Motor neuron (in vitro differentiated cells): ENCODE measurements at regions of chr9 and their contacts with region 1.

Region 1: GRCh38 chr9:2072752-2073405 is 57.7 kb downstream of the SMARCA2 start:
- ATAC-seq: no peak
- H3K4me3 ChIP-seq: no peak overlapping the region
- H3K27ac ChIP-seq: no peak overlapping the region
- H3K4me1 ChIP-seq: no peaks in the 10 kb centered on the region

Region 2: GRCh38 chr9:2014696-2015580 is 57.9 kb before region 1 on chr9 and contains the start of gene SMARCA2:
- in situ Hi-C with region 1: loop called in 1 of 9 experiments (anchors 10 kb)
- ATAC-seq: peak; percentile 71 to 89 (median 88)
- H3K4me3 ChIP-seq: peak within 1 kb of the TSS; percentile 62 to 81 (median 67)
- H3K27ac ChIP-seq: peak within 1 kb of the TSS; percentile 79 to 80
- H3K4me1 ChIP-seq: peaks cover 6 to 11% of the 10 kb centered on the region in 2 donors
- total RNA-seq, gene SMARCA2: 16.7 to 217 (median 66.6) TPM